ENCODE measurements at regions of chr10 and their contacts with region 1.

Region 1: GRCh38 chr10:73886085-73886529 is 11.8 kb upstream of the CAMK2G start:
- DNase-seq: no peak
- H3K4me3 ChIP-seq: no peak overlapping the region
- H3K27me3 ChIP-seq: no peaks in the 10 kb centered on the region
- CTCF ChIP-seq: peak; percentile 89

Region 2: DNA sequence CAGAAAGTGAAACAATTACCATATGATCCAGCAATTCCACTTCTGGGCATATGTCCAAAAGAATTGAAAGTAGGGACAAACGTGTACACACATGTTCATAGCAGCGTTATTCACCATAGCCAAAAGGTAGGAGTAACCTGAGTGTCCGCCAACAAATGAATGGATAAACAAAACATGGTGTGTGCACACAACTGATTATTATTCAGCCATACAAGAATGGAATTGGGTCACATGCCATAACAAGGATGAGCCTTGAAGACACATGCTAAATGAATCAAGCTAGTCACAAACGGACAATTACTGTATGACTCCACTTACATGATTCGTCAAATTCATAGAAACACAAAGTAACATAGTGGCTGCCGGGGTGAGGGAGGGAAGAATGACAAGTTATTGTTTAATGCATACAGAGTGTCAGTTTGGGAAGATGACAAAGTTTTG is 996.7 kb before region 1 on chr10:
- CTCF ChIA-PET with region 1: no interaction called
- POLR2A ChIA-PET with region 1: no interaction called
- DNase-seq: no peak
- H3K4me3 ChIP-seq: no peak overlapping the region
- H3K27me3 ChIP-seq: no peaks in the 10 kb centered on the region
- CTCF ChIP-seq: no peak

Region 3: DNA sequence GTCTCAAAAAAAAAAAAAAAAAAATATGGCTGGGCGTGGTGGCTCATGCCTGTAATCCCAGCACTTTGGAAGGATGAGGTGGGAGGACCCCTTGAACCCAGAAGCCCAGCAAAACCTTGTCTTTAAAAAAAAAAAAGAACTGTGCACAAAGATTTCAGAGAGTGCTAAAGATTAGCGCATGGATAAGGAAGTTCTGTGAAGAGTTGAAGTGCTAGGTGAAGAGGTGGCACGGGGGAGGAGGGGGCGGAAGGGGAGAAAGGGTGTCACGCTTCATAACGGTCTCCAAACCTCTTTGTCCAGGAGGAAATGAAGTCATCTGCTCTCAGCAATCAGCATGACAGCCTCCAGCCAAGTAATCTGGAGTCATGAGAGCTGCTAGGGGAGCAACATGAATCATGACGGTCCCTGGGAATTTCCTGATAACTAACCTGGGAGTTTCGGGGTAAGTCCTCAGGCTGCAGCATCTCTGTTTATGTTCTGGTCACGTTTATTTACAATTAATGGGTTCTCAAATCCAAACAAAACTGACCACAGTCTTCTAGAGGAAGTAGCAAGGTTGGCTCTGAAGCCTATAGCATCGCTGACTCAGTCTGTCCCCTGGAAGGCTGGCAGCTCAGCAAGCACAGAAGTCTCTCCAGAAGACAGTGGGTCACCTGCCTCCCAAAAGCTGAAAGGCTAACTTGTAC is 22.9 kb after region 1 on chr10:
- CTCF ChIA-PET with region 1: interaction called, 16 read pairs
- POLR2A ChIA-PET with region 1: interaction called, 4 read pairs
- DNase-seq: peak; percentile 93
- H3K4me3 ChIP-seq: no peak overlapping the region
- H3K27me3 ChIP-seq: no peaks in the 10 kb centered on the region
- CTCF ChIP-seq: no peak

Region 4: GRCh38 chr10:74075906-74076305 is 189.8 kb after region 1 on chr10:
- CTCF ChIA-PET with region 1: interaction called, 44 read pairs
- POLR2A ChIA-PET with region 1: no interaction called
- DNase-seq: no peak
- H3K4me3 ChIP-seq: no peak overlapping the region
- H3K27me3 ChIP-seq: no peaks in the 10 kb centered on the region
- CTCF ChIP-seq: no peak

Region 5: DNA sequence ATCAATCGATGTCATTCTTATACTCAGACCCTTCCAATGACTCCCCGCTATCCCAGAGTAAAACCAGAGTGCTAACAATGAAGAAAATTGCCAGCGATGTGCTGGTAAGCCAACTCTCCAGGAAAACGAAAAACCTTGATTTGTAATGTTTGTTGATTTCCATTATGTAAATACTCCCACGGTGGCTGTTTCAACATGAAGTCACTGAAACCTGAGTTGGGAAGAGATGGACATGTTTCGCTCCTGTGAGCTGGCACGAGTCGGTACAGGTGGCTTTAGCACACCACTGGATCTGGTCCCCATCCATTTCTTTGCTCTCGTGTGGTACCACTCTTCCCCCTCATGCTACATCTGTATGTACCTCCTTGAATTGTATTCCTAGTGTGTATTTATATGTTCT is 211.7 kb after region 1 on chr10:
- CTCF ChIA-PET with region 1: interaction called, 11 read pairs
- POLR2A ChIA-PET with region 1: no interaction called
- DNase-seq: no peak
- H3K4me3 ChIP-seq: no peak overlapping the region
- H3K27me3 ChIP-seq: no peaks in the 10 kb centered on the region
- CTCF ChIP-seq: no peak

Measured in BJ (cell line).